ENCODE measurements at regions of chr19 and their contacts with region 1.

Region 1: DNA sequence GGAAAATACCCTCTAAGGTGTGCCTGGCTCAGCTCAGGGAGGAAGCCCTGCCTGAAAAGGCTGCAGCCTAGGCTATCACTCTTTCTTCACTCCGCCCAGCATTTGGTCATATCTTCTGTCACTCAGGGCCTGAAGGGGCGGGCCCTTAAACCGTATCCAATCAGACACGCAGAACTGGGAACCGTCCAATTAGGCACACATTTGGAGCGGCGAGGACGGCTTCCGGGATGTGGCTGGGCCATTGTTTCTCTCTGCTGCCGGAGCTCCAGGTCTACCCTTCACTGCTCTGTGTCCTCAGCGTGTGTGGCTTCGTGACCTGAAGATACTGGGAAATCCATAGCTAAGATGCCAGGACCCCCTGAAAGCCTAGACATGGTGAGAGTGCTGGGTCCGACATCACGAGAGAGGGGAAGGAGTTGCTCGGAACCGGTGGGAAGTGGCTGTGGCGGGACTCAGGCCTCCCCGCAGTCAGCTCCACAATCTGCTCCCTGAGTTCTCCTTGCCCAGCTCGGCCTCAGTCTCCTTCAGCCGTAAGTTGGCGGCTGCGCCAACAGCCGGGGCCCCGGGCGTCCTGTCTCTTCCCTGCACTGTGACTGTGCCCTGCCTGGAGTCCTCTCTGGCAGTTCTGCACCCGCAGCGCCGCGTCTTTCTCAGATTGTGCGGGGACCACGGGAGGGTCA is at the start of gene ZNF493:
- DNase-seq: peak; percentile 93
- ATAC-seq: peak; percentile 100
- H3K4me3 ChIP-seq: peak within 1 kb of the TSS; percentile 63 to 96 (median 75)
- H3K4me3 Mint-ChIP-seq: peak within 1 kb of the TSS; percentile 94
- H3K27ac ChIP-seq: peak within 1 kb of the TSS; percentile 62 to 64
- H3K27ac Mint-ChIP-seq: peak within 1 kb of the TSS; percentile 88
- H3K4me1 ChIP-seq: peaks cover 12 to 15% of the 10 kb centered on the region in 2 donors
- H3K4me1 Mint-ChIP-seq: peaks cover 23% of the 10 kb centered on the region
- H3K27me3 ChIP-seq: no peaks in the 10 kb centered on the region
- H3K27me3 Mint-ChIP-seq: no peaks in the 10 kb centered on the region
- CTCF ChIP-seq: no peak
- total RNA-seq, gene ZNF493: 79.0 and 85.3 TPM in 2 replicates

Region 2: GRCh38 chr19:21082011-21082975 is 314.7 kb before region 1 on chr19 and contains the start of gene ZNF714:
- CTCF ChIA-PET with region 1: no interaction called
- POLR2A ChIA-PET with region 1: no interaction called
- intact Hi-C with region 1: loop called (anchors 5 kb)
- DNase-seq: peak; percentile 84
- ATAC-seq: peak; percentile 100
- H3K4me3 ChIP-seq: peak within 1 kb of the TSS in 4 of 5 experiments; percentile 87 to 96 (median 90)
- H3K4me3 Mint-ChIP-seq: peak within 1 kb of the TSS; percentile 99
- H3K27ac ChIP-seq: peak within 1 kb of the TSS; percentile 52 to 57
- H3K27ac Mint-ChIP-seq: peak within 1 kb of the TSS; percentile 94
- H3K4me1 ChIP-seq: peaks cover 0 to 3% of the 10 kb centered on the region in 2 donors
- H3K4me1 Mint-ChIP-seq: peaks cover 14% of the 10 kb centered on the region
- H3K27me3 ChIP-seq: no peaks in the 10 kb centered on the region
- H3K27me3 Mint-ChIP-seq: no peaks in the 10 kb centered on the region
- CTCF ChIP-seq: no peak
- total RNA-seq, gene ZNF714: 10.7 and 11.9 TPM in 2 replicates

Region 3: GRCh38 chr19:21314676-21315075 is 82.4 kb before region 1 on chr19:
- CTCF ChIA-PET with region 1: no interaction called
- POLR2A ChIA-PET with region 1: no interaction called
- intact Hi-C with region 1: no loop called
- DNase-seq: no peak
- ATAC-seq: no peak
- H3K4me3 ChIP-seq: no peak overlapping the region
- H3K4me3 Mint-ChIP-seq: no peak overlapping the region
- H3K27ac ChIP-seq: no peak overlapping the region
- H3K27ac Mint-ChIP-seq: no peak overlapping the region
- H3K4me1 ChIP-seq: no peaks in the 10 kb centered on the region
- H3K4me1 Mint-ChIP-seq: peaks cover 22% of the 10 kb centered on the region
- H3K27me3 ChIP-seq: no peaks in the 10 kb centered on the region
- H3K27me3 Mint-ChIP-seq: no peaks in the 10 kb centered on the region
- CTCF ChIP-seq: no peak

Region 4: DNA sequence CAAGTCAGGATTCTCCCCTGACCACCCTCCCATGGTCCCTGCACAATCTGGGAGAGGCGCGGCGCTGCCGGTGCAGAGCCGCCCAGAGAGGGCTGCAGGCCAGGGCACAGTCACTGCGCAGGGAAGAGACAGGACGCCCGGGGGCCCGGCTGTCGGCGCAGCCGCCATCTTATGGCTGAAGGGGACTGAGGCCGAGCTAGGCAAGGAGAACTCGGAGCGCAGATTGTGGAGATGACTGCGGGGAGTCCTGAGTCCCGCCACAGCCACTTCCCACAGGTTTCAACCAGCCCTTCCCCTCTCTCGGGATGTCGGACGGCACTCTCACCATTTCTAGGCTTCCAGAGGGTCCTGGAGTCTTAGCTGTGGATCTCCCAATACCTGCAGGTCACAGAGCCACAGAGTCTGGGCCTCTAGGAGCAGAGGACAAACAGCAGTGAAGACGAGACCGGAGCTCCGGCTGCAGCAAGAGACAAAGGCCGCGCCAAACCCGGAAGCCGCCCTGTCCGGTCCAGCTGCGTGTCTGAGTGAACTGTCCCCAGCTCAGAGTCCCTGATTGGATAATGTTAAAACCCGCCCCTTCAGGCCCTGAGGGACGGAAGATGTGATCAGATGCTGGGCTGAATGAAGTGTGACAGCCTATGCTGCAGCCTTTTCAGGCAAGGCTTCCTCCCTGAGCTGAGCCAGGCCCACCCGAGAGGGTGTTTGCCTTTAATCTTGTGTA is 68.0 kb before region 1 on chr19 and contains the start of gene ZNF708:
- CTCF ChIA-PET with region 1: interaction called, 3 read pairs
- POLR2A ChIA-PET with region 1: interaction called, 6 read pairs
- intact Hi-C with region 1: loop called (anchors 1 kb)
- DNase-seq: peak; percentile 88
- ATAC-seq: peak; percentile 99
- H3K4me3 ChIP-seq: peak within 1 kb of the TSS; percentile 85 to 100 (median 96)
- H3K4me3 Mint-ChIP-seq: peak within 1 kb of the TSS; percentile 99
- H3K27ac ChIP-seq: peak within 1 kb of the TSS; percentile 97 to 99
- H3K27ac Mint-ChIP-seq: peak within 1 kb of the TSS; percentile 99
- H3K4me1 ChIP-seq: peaks cover 9 to 16% of the 10 kb centered on the region in 2 donors
- H3K4me1 Mint-ChIP-seq: peaks cover 39% of the 10 kb centered on the region
- H3K27me3 ChIP-seq: no peaks in the 10 kb centered on the region
- H3K27me3 Mint-ChIP-seq: no peaks in the 10 kb centered on the region
- CTCF ChIP-seq: no peak
- total RNA-seq, gene ZNF708: 37.7 and 38.2 TPM in 2 replicates

Region 5: GRCh38 chr19:21383980-21384582 is 13.0 kb before region 1 on chr19:
- CTCF ChIA-PET with region 1: no interaction called
- POLR2A ChIA-PET with region 1: no interaction called
- intact Hi-C with region 1: no loop called
- DNase-seq: no peak
- ATAC-seq: no peak
- H3K4me3 ChIP-seq: peak overlapping the region in 1 of 5 experiments; percentile 25
- H3K4me3 Mint-ChIP-seq: no peak overlapping the region
- H3K27ac ChIP-seq: no peak overlapping the region
- H3K27ac Mint-ChIP-seq: no peak overlapping the region
- H3K4me1 ChIP-seq: no peaks in the 10 kb centered on the region
- H3K4me1 Mint-ChIP-seq: no peaks in the 10 kb centered on the region
- H3K27me3 ChIP-seq: no peaks in the 10 kb centered on the region
- H3K27me3 Mint-ChIP-seq: no peaks in the 10 kb centered on the region
- CTCF ChIP-seq: no peak

Region 6: DNA sequence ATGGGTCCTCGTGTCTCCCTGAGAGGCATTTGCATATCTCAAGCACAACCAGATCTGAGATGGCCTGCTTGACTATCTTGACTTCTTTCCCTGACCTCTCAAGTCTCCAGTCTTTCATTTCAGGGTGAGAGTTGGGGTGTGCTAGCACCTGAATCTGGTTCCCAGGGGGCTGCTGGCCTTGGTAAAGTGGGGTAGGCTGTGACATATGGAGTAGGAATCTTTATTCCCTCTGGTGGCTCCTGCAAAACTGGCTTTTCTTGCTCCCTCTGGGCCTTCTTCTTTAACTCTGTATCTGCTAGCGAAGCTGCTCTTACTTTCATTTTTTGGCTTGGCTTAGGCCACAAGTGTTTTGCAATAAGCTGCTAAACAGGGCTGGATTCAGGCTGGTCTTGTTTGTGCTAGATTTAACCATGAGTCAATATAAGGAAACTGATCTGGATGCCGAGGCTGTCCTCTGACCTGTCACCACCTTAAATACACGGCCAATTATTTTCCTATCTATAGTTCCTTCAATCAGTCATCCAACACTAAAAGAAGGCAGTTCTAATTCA is 42.2 kb after region 1 on chr19:
- CTCF ChIA-PET with region 1: no interaction called
- POLR2A ChIA-PET with region 1: no interaction called
- intact Hi-C with region 1: no loop called
- DNase-seq: no peak
- ATAC-seq: no peak
- H3K4me3 ChIP-seq: no peak overlapping the region
- H3K4me3 Mint-ChIP-seq: no peak overlapping the region
- H3K27ac ChIP-seq: no peak overlapping the region
- H3K27ac Mint-ChIP-seq: no peak overlapping the region
- H3K4me1 ChIP-seq: no peaks in the 10 kb centered on the region
- H3K4me1 Mint-ChIP-seq: no peaks in the 10 kb centered on the region
- H3K27me3 ChIP-seq: no peaks in the 10 kb centered on the region
- H3K27me3 Mint-ChIP-seq: no peaks in the 10 kb centered on the region
- CTCF ChIP-seq: no peak

Region 7: DNA sequence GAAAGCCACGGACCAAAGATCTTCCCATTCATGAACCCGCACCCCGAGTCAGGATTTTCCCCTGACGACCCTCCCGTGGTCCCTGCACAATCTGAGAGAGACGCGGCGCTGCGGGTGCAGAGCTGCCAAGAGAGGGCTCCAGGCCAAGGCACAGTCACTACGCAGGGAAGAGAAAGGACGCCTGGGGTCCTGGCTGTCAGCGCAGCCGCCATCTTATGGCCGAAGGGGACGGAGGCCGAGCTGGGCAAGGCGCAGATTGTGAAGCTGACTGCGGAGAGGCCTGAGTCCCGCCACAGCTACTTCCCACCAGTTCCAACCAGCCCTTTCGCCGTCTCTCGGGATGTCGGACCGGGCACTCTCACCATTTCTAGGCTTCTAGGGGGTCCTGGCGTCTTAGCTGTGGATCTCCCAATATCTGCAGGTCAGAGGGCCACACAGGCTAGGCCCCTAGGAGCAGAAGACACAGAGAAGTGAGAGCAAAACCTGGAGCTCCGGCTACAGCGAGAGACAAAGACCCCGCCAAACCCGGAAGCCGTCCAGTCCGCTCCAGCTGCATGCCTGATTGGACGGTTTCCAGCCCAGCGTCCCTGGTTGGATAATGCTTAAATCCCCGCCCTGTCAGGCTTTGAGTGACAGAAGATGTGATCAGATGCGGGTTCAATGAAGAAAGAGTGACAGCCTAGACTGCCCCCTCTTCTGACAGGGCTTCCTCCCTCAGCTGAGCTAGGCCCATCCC is 370.2 kb after region 1 on chr19 and contains the start of gene ZNF100:
- CTCF ChIA-PET with region 1: no interaction called
- POLR2A ChIA-PET with region 1: no interaction called
- intact Hi-C with region 1: loop called (anchors 5 kb)
- DNase-seq: peak; percentile 89
- ATAC-seq: peak; percentile 97
- H3K4me3 ChIP-seq: peak within 1 kb of the TSS; percentile 77 to 91 (median 79)
- H3K4me3 Mint-ChIP-seq: peak within 1 kb of the TSS; percentile 96
- H3K27ac ChIP-seq: peak within 1 kb of the TSS; percentile 82 to 90
- H3K27ac Mint-ChIP-seq: peak within 1 kb of the TSS; percentile 90
- H3K4me1 ChIP-seq: peaks cover 9 to 10% of the 10 kb centered on the region in 2 donors
- H3K4me1 Mint-ChIP-seq: peaks cover 17% of the 10 kb centered on the region
- H3K27me3 ChIP-seq: no peaks in the 10 kb centered on the region
- H3K27me3 Mint-ChIP-seq: no peaks in the 10 kb centered on the region
- CTCF ChIP-seq: no peak
- total RNA-seq, gene ZNF100: 16.0 and 21.6 TPM in 2 replicates